ENCODE measurements at regions of chrX and their contacts with region 1.

Region 1: DNA sequence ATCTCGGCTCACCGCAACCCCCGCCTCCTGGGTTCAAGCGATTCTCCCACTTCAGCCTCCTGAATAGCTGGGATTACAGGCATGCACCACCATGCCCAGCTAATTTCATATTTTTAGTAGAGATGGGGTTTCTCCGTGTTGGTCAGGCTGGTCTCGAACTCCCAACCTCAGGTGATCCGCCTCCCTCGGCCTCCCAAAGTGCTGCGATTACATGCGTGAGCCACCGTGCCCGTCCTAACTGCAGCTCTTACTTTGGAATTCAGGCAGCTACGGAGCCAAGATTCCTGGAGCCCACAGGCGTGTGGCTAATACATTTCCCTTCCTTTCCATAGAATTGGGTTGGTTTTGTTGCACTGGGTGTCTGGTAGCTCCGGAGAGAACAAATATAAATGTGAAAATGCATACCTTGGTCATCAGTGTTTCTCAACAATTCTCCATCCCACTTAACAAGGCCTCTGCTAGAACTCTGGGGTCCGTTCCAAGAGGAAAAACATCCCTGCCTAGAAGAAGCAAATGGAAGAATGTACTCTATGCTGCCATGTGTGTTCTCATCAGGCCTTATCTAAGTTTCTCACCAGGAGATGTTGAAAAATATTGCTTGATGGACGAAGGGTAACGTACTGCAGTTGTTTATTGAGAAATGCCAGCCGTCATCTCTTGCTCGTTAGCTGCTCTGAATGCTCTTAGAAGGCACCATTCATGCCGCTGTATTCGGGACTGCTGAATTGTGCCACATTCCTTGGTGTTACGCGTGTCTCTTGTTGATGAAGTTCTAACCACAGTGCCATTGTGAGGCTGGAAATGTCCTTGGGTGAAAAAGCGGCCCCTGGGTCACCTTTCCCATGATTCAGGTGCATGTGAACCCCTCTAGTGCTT is 50.6 kb upstream of the CD99 start:
- H3K4me3 Mint-ChIP-seq: no peak overlapping the region
- H3K27ac Mint-ChIP-seq: no peak overlapping the region
- H3K4me1 Mint-ChIP-seq: peaks cover 27% of the 10 kb centered on the region
- H3K27me3 Mint-ChIP-seq: no peaks in the 10 kb centered on the region

Region 2: GRCh38 chrX:2559124-2559523 is 81.4 kb before region 1 on chrX:
- intact Hi-C with region 1: no loop called
- H3K4me3 Mint-ChIP-seq: no peak overlapping the region
- H3K27ac Mint-ChIP-seq: no peak overlapping the region
- H3K4me1 Mint-ChIP-seq: no peaks in the 10 kb centered on the region
- H3K27me3 Mint-ChIP-seq: peaks cover 7% of the 10 kb centered on the region

Region 3: DNA sequence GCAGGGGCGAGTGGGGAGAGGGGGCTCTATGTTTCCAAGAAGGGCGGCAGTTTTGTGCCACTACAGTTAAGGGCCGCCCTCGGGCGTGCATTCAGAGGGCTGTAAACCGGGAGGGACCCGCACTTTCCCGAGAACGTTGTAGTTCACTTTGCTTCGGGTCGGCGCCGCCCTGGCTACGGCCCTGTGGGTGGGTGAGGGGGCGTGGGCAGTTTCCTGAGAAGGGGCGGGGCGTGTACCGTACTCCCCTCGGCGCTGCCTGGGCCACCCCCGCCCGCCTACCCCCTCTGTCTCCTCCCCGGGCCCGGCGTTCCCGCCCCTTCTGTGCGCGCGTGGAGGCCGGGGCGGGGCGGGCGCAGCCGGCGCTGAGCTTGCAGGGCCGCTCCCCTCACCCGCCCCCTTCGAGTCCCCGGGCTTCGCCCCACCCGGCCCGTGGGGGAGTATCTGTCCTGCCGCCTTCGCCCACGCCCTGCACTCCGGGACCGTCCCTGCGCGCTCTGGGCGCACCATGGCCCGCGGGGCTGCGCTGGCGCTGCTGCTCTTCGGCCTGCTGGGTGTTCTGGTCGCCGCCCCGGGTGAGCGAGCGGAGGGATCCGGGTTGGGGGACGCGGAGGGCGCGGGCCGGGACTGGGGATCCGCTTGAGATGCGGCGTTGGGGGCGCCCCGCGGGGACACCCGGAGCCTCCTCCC is 50.5 kb after region 1 on chrX and contains the start of gene CD99:
- intact Hi-C with region 1: no loop called
- H3K4me3 Mint-ChIP-seq: peak within 1 kb of the TSS; percentile 88
- H3K27ac Mint-ChIP-seq: peak within 1 kb of the TSS; percentile 85
- H3K4me1 Mint-ChIP-seq: peaks cover 41% of the 10 kb centered on the region
- H3K27me3 Mint-ChIP-seq: peaks cover 2% of the 10 kb centered on the region

Region 4: DNA sequence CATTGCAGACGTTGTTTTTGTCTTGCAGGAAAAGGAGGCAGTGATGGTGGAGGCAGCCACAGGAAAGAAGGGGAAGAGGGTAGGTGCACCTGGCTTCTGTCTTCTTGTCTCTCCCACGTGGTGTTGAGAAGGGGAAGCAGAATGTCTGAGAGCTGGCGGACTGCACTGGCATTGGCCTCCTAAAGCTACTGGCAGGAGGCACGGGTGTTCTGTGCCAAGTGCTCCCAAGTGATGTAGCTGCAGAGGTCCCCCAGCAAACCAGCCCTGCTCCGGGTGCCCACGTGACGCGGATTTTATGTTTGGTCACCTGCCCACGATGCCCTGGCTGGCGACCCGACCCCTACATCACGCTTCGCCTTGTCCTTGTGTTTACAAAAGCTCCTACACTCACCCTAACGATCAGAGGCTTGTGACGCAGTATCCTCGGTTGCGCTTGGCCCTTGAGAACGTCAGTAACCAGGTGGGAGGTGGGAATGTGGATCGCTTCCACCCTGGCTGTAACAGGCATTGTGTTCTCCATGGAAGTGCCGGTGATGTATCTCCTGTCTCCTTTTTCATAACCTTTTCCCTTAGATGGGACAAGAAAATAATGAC is 82.9 kb after region 1 on chrX:
- intact Hi-C with region 1: loop called (anchors 10 kb)
- H3K4me3 Mint-ChIP-seq: no peak overlapping the region
- H3K27ac Mint-ChIP-seq: no peak overlapping the region
- H3K4me1 Mint-ChIP-seq: no peaks in the 10 kb centered on the region
- H3K27me3 Mint-ChIP-seq: no peaks in the 10 kb centered on the region

Region 5: DNA sequence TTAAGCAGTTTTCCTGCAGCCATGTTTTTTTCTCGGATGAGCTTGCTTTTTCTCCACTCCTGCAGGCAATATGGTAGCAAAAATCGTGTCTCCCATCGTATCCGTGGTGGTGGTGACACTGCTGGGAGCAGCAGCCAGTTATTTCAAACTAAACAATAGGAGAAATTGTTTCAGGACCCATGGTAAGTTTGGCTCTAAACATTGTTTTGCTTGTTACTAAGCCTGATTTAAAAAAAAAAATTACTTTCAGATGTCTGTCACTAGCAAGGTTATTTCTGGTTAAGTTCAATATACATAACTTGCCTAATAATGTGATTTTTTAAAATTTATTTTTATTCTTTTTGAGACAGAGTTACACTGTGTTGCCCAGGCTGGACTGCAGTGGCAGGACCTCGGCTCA is 170.8 kb after region 1 on chrX:
- intact Hi-C with region 1: loop called (anchors 2 kb)
- H3K4me3 Mint-ChIP-seq: no peak overlapping the region
- H3K27ac Mint-ChIP-seq: no peak overlapping the region
- H3K4me1 Mint-ChIP-seq: no peaks in the 10 kb centered on the region
- H3K27me3 Mint-ChIP-seq: no peaks in the 10 kb centered on the region

Region 6: GRCh38 chrX:2857566-2857965 is 217.1 kb after region 1 on chrX:
- intact Hi-C with region 1: no loop called
- H3K4me3 Mint-ChIP-seq: no peak overlapping the region
- H3K27ac Mint-ChIP-seq: no peak overlapping the region
- H3K4me1 Mint-ChIP-seq: no peaks in the 10 kb centered on the region
- H3K27me3 Mint-ChIP-seq: no peaks in the 10 kb centered on the region